Esophagus muscularis mucosa (tissue), 4 donors: ENCODE measurements at regions of chr1 and their contacts with region 1.

Region 1: GRCh38 chr1:75265792-75266191 is 131.6 kb downstream of the LHX8 start:
- DNase-seq: no peak
- H3K4me3 ChIP-seq: no peak overlapping the region
- H3K27ac ChIP-seq: no peak overlapping the region
- H3K4me1 ChIP-seq: no peaks in the 10 kb centered on the region
- H3K27me3 ChIP-seq: no peaks in the 10 kb centered on the region
- CTCF ChIP-seq: peak; percentile 48 to 61 (median 49)
- EP300 ChIP-seq: no peak
- POLR2A ChIP-seq: no peak

Region 2: DNA sequence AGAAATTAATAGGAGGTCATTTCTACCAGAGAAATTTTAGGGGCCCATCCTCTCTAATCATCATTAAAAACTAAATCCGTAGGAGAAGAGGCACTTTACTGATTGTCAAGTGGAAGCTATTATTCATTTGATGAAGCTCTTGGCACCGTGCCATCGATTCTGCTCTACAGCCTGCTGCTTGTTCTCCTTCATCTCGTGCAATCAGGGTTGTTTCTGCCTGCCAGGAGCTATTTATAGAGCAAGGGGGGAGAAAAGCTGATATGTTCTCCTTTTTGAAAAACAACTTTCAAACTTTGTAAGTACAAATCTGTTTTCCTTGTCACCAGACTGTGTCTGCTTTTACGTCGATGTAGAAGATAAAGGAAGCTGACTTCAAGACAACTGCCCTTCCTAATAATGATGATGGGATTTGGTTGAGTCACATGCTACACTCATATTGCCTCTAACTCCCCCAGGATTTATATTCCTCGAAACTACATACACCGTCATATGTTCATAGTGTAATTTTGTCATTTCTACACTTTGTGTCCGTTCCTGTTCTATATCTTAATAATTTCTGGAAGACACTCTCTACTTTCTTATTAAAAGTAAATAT is 301.2 kb before region 1 on chr1:
- intact Hi-C with region 1: no loop called
- DNase-seq: no peak
- H3K4me3 ChIP-seq: no peak overlapping the region
- H3K27ac ChIP-seq: no peak overlapping the region
- H3K4me1 ChIP-seq: no peaks in the 10 kb centered on the region
- H3K27me3 ChIP-seq: no peaks in the 10 kb centered on the region
- CTCF ChIP-seq: no peak
- EP300 ChIP-seq: no peak
- POLR2A ChIP-seq: no peak

Region 3: DNA sequence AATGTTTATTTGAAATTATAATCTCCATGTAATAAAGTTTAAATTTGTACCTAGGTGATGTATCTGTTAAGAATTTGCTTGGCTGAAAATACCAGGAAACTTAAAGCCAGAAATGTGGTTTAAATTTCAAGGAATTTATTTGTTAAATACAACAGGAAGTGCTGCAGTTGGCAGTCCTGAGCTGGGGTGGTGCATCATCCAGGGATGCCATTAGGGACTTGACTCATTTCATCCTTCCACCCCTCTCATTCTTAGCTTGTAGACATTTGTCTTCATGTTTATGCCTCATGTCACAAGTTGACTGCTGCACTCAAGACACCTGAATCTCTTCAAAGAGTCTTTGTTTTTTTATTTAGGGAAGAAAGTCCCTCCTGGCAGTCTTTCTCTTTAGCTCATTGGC is 44.3 kb after region 1 on chr1:
- intact Hi-C with region 1: no loop called
- DNase-seq: no peak
- H3K4me3 ChIP-seq: no peak overlapping the region
- H3K27ac ChIP-seq: no peak overlapping the region
- H3K4me1 ChIP-seq: no peaks in the 10 kb centered on the region
- H3K27me3 ChIP-seq: no peaks in the 10 kb centered on the region
- CTCF ChIP-seq: no peak
- EP300 ChIP-seq: no peak
- POLR2A ChIP-seq: no peak

Region 4: DNA sequence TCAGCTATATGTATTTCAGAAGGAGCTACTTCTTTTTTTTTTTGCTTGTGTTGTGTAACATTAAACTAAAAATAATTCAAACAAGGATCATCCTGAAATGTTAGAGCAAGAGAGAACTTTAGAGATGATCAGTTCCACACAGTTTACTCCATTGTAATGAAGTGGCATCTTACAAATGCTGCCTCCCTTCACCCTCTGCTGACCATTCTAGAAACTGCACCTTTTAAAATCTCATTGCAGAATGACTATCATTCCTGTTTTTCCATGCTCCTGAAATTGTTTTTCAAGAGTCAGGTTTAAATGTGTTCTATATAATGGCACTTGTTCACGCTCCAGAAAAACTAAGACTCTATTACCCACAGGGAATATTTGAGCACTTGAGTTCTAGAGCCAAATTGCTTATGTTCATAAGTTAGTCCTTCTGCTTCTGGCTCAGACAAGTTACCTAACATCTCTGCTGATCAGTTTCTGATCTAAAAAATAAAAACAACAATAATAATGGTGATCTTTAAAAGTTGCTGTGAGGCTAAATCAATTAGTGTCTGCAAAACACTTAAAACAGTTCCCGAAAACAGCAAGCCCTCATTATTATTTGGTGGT is 366.7 kb after region 1 on chr1:
- intact Hi-C with region 1: loop called (anchors 5 kb)
- DNase-seq: no peak
- H3K4me3 ChIP-seq: no peak overlapping the region
- H3K27ac ChIP-seq: no peak overlapping the region
- H3K4me1 ChIP-seq: no peaks in the 10 kb centered on the region
- H3K27me3 ChIP-seq: no peaks in the 10 kb centered on the region
- CTCF ChIP-seq: peak; percentile 51 to 78 (median 67)
- EP300 ChIP-seq: no peak
- POLR2A ChIP-seq: no peak